PC-9 (cell line): ENCODE measurements at regions of chr3 and their contacts with region 1.

Region 1: GRCh38 chr3:126083913-126084767 is at the start of gene SLC41A3:
- DNase-seq: peak; percentile 66 to 92
- H3K4me3 ChIP-seq: peak within 1 kb of the TSS; percentile 83
- H3K27ac ChIP-seq: no peak within 1 kb of the TSS
- H3K4me1 ChIP-seq: peaks cover 23% of the 10 kb centered on the region
- H3K27me3 ChIP-seq: no peaks in the 10 kb centered on the region
- CTCF ChIP-seq: peak; percentile 58; the same call in 1 of the 2 replicates
- total RNA-seq, gene SLC41A3: 59.2 and 67.0 TPM in 2 replicates

Region 2: GRCh38 chr3:125990253-125990970 is 93.7 kb before region 1 on chr3:
- CTCF ChIA-PET with region 1: no interaction called
- POLR2A ChIA-PET with region 1: interaction called, 5 read pairs
- intact Hi-C with region 1: loop called (anchors 1 kb)
- DNase-seq: peak; percentile 70 to 85
- H3K4me3 ChIP-seq: peak overlapping the region; percentile 63
- H3K27ac ChIP-seq: no peak overlapping the region
- H3K4me1 ChIP-seq: no peaks in the 10 kb centered on the region; the same call in 1 of the 2 replicates
- H3K27me3 ChIP-seq: peaks cover 4% of the 10 kb centered on the region; the same call in 1 of the 2 replicates
- CTCF ChIP-seq: no peak

Region 3: GRCh38 chr3:126056681-126057546 is 27.2 kb before region 1 on chr3:
- CTCF ChIA-PET with region 1: no interaction called
- POLR2A ChIA-PET with region 1: no interaction called
- intact Hi-C with region 1: loop called (anchors 1 kb)
- DNase-seq: peak in 1 of 2 experiments; percentile 81
- H3K4me3 ChIP-seq: no peak overlapping the region
- H3K27ac ChIP-seq: no peak overlapping the region
- H3K4me1 ChIP-seq: peaks cover 9% of the 10 kb centered on the region; the same call in 1 of the 2 replicates
- H3K27me3 ChIP-seq: no peaks in the 10 kb centered on the region
- CTCF ChIP-seq: no peak

Region 4: GRCh38 chr3:126197854-126198584 is 113.9 kb after region 1 on chr3:
- CTCF ChIA-PET with region 1: interaction called, 3 read pairs
- POLR2A ChIA-PET with region 1: no interaction called
- intact Hi-C with region 1: loop called (anchors 5 kb)
- DNase-seq: peak; percentile 87 to 90
- H3K4me3 ChIP-seq: peak overlapping the region; percentile 59
- H3K27ac ChIP-seq: peak overlapping the region; percentile 83
- H3K4me1 ChIP-seq: 0 out of 2 replicates have a peak, but pooled peaks cover 5% of the 10 kb centered on the region
- H3K27me3 ChIP-seq: no peaks in the 10 kb centered on the region
- CTCF ChIP-seq: peak; percentile 81